HepG2 (cell line): ENCODE measurements at regions of chr11 and their contacts with region 1.

Region 1: DNA sequence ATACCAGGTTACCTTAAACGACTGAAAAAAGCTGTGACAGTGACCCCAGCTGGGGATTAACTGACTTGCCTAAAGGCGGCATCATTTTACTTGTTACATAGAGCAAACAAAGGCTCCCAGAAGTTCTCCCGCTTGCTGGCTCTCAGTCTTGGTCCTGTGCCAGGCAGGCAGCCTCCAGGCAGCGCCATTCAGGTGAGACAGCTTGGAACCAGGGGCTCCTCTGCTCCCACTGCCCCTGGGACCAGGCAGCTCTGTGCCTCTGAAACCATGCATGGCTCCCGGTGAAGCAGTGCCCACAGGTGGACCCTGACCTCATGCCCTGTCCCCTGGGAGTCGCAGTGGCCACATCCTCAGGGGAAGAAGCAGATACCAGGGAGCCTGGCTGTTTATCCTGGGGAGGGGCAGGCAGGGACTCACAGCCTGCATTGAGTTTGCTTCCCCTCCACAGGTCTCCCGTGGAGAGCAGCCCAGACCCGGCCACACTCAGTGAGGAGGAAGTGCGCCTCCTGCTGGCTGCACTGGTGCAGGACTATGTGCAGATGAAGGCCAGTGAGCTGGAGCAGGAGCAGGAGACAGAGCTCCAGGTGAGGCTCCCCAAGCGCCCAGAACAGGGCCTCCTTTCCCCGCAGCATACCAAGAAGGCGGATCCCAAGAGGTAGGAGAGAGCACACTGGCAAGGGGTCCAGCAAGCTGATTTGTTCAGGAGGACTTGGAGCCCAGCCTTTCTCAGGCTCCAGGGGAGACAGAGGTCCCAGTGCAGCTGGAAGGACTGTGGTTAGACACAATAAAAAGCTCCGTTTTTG is 15.6 kb upstream of the CYP2R1 start:
- DNase-seq: peak; percentile 71
- ATAC-seq: peak; percentile 96
- H3K4me3 ChIP-seq: peak overlapping the region; percentile 39 to 71 (median 54)
- H3K27ac ChIP-seq: no peak overlapping the region
- H3K4me1 ChIP-seq: peaks cover 23% of the 10 kb centered on the region
- H3K27me3 ChIP-seq: no peaks in the 10 kb centered on the region
- CTCF ChIP-seq: peak; percentile 94
- EP300 ChIP-seq: no peak
- POLR2A ChIP-seq: no peak
- RAD21 ChIP-seq: peak; percentile 55; the same call in 1 of the 2 replicates

Region 2: GRCh38 chr11:14373931-14374646 is 533.5 kb before region 1 on chr11:
- CTCF ChIA-PET with region 1: no interaction called
- POLR2A ChIA-PET with region 1: no interaction called
- in situ Hi-C with region 1: no loop called
- intact Hi-C with region 1: no loop called
- DNase-seq: peak; percentile 38
- ATAC-seq: peak; percentile 78
- H3K4me3 ChIP-seq: no peak overlapping the region
- H3K27ac ChIP-seq: no peak overlapping the region
- H3K4me1 ChIP-seq: peaks cover 18% of the 10 kb centered on the region
- H3K27me3 ChIP-seq: peaks cover 0 to 7% of the 10 kb centered on the region in 2 experiments; a peak in 1 of 5 replicates
- CTCF ChIP-seq: no peak
- EP300 ChIP-seq: no peak
- POLR2A ChIP-seq: no peak
- RAD21 ChIP-seq: no peak

Region 3: GRCh38 chr11:14537134-14537599 is 370.4 kb before region 1 on chr11:
- CTCF ChIA-PET with region 1: interaction called, 6 read pairs
- POLR2A ChIA-PET with region 1: no interaction called
- in situ Hi-C with region 1: loop called (anchors 5 kb)
- intact Hi-C with region 1: loop called (anchors 1 kb)
- DNase-seq: peak; percentile 20
- ATAC-seq: peak; percentile 49; the same call in 2 of the 3 replicates
- H3K4me3 ChIP-seq: no peak overlapping the region
- H3K27ac ChIP-seq: peak overlapping the region; percentile 6
- H3K4me1 ChIP-seq: peaks cover 31% of the 10 kb centered on the region
- H3K27me3 ChIP-seq: no peaks in the 10 kb centered on the region
- CTCF ChIP-seq: peak; percentile 63
- EP300 ChIP-seq: no peak
- POLR2A ChIP-seq: no peak
- RAD21 ChIP-seq: peak; percentile 50; the same call in 1 of the 2 replicates

Region 4: GRCh38 chr11:14643697-14644225 is 263.9 kb before region 1 on chr11 and contains the start of gene PDE3B:
- CTCF ChIA-PET with region 1: no interaction called
- POLR2A ChIA-PET with region 1: interaction called, 6 read pairs
- in situ Hi-C with region 1: no loop called
- intact Hi-C with region 1: loop called (anchors 1 kb)
- DNase-seq: peak; percentile 83
- ATAC-seq: peak; percentile 91
- H3K4me3 ChIP-seq: peak within 1 kb of the TSS; percentile 96 to 100 (median 99)
- H3K27ac ChIP-seq: peak within 1 kb of the TSS; percentile 92
- H3K4me1 ChIP-seq: peaks cover 51% of the 10 kb centered on the region
- H3K27me3 ChIP-seq: no peaks in the 10 kb centered on the region; a peak in 1 of 5 replicates
- CTCF ChIP-seq: peak; percentile 59
- EP300 ChIP-seq: no peak
- POLR2A ChIP-seq: peak; percentile 86 to 93
- RAD21 ChIP-seq: peak; percentile 56
- total RNA-seq, gene PDE3B: 19.6 and 26.5 TPM in 2 replicates

Region 5: DNA sequence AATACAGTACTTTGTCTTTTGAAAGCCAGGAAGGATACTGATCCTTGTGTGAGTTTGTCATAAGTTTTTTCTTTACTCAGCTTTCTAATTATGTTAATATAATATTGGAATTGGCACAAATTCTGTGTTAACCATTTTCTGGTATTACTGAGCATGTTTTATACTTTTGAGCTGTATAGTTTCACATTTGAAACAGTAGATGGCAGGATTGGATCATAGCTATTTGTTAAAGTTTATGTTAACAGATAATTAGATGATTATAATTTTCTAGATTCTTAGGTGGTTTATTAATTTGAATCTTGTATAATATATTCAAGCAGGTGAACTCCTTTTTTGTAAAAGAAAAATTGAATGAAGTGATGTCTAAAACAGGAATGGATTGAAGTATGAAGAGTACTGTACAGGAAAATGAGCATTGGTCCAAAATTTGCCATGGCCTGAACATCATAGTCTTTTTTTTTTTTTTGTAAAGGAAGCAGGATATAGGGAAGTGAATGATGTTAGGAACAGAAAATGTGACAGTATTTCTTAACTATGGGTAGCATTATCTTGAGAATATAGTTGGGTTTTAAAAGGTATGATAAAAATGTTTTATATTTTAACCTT is 117.6 kb before region 1 on chr11:
- CTCF ChIA-PET with region 1: interaction called, 22 read pairs
- POLR2A ChIA-PET with region 1: interaction called, 4 read pairs
- in situ Hi-C with region 1: loop called (anchors 5 kb)
- intact Hi-C with region 1: loop called (anchors 1 kb)
- DNase-seq: no peak
- ATAC-seq: no peak
- H3K4me3 ChIP-seq: no peak overlapping the region
- H3K27ac ChIP-seq: no peak overlapping the region
- H3K4me1 ChIP-seq: no peaks in the 10 kb centered on the region
- H3K27me3 ChIP-seq: no peaks in the 10 kb centered on the region
- CTCF ChIP-seq: peak; percentile 28
- EP300 ChIP-seq: no peak
- POLR2A ChIP-seq: no peak
- RAD21 ChIP-seq: no peak

Region 6: GRCh38 chr11:15006139-15006759 is 98.6 kb after region 1 on chr11:
- CTCF ChIA-PET with region 1: interaction called, 3 read pairs
- POLR2A ChIA-PET with region 1: no interaction called
- in situ Hi-C with region 1: no loop called
- intact Hi-C with region 1: loop called (anchors 1 kb)
- DNase-seq: peak; percentile 46
- ATAC-seq: peak; percentile 83
- H3K4me3 ChIP-seq: no peak overlapping the region
- H3K27ac ChIP-seq: no peak overlapping the region
- H3K4me1 ChIP-seq: no peaks in the 10 kb centered on the region
- H3K27me3 ChIP-seq: no peaks in the 10 kb centered on the region
- CTCF ChIP-seq: peak; percentile 65
- EP300 ChIP-seq: no peak
- POLR2A ChIP-seq: no peak
- RAD21 ChIP-seq: no peak

Region 7: DNA sequence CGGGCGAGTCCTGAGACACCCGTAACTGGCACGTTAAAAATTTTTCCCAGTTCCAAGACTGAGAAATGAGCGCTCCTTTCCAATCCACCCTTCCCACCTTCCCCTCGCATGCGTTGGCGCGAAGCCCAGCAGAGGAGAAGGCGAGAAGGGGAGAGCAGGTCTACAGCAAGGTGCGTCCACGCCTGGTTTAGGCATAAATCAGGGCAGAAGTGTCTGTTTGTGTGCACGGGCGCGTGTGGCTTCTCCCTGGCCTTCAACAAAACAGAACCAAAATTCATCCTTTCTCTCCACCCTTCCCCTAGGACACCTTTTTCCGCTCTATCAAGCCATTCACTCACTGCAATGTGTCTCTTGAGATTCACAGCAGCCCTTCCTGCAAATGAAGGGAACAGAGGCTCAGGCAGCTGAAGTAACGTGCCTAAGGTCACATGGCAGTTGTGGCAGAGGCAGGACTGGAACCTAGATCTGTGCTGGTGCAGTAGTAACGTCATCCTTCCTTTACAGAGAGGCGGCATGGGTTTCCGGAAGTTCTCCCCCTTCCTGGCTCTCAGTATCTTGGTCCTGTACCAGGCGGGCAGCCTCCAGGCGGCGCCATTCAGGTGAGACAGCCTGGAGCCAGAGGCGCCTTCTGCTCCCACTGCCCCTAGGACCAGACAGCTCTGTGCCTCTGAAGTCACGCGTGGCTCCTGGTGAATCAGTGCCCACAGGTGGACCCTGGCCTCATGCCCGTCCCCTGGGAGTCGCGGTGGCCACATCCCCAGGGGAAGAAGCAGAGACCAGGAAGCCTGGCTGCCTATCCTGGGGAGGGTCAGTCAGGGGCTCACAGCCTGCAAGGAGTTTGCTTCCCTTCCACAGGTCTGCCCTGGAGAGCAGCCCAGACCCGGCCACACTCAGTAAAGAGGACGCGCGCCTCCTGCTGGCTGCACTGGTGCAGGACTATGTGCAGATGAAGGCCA is 166.9 kb after region 1 on chr11:
- CTCF ChIA-PET with region 1: interaction called, 11 read pairs
- POLR2A ChIA-PET with region 1: no interaction called
- in situ Hi-C with region 1: no loop called
- intact Hi-C with region 1: loop called (anchors 1 kb)
- DNase-seq: peak; percentile 62
- ATAC-seq: peak; percentile 98
- H3K4me3 ChIP-seq: peak overlapping the region in 1 of 3 experiments; percentile 24; a peak in 1 of 6 replicates
- H3K27ac ChIP-seq: no peak overlapping the region
- H3K4me1 ChIP-seq: peaks cover 12% of the 10 kb centered on the region
- H3K27me3 ChIP-seq: peaks cover 5 to 30% of the 10 kb centered on the region in 2 experiments; a peak in 4 of 5 replicates
- CTCF ChIP-seq: peak; percentile 92
- EP300 ChIP-seq: no peak
- POLR2A ChIP-seq: no peak
- RAD21 ChIP-seq: peak; percentile 72

Region 8: GRCh38 chr11:15208378-15209222 is 301.0 kb after region 1 on chr11:
- CTCF ChIA-PET with region 1: no interaction called
- POLR2A ChIA-PET with region 1: no interaction called
- in situ Hi-C with region 1: no loop called
- intact Hi-C with region 1: loop called (anchors 2 kb)
- DNase-seq: peak; percentile 52
- ATAC-seq: peak; percentile 99
- H3K4me3 ChIP-seq: no peak overlapping the region
- H3K27ac ChIP-seq: no peak overlapping the region
- H3K4me1 ChIP-seq: peaks cover 5% of the 10 kb centered on the region; the same call in 1 of the 2 replicates
- H3K27me3 ChIP-seq: no peaks in the 10 kb centered on the region
- CTCF ChIP-seq: peak; percentile 97
- EP300 ChIP-seq: no peak
- POLR2A ChIP-seq: no peak
- RAD21 ChIP-seq: peak; percentile 91